ENCODE measurements at regions of chr1 and their contacts with region 1.

Region 1: GRCh38 chr1:111309690-111310089 is 19.0 kb downstream of the CHIA start:
- DNase-seq: no peak
- ATAC-seq: no peak
- H3K4me3 Mint-ChIP-seq: no peak overlapping the region
- H3K27ac Mint-ChIP-seq: no peak overlapping the region
- H3K4me1 Mint-ChIP-seq: no peaks in the 10 kb centered on the region
- H3K27me3 Mint-ChIP-seq: no peaks in the 10 kb centered on the region

Region 2: GRCh38 chr1:111283838-111284237 is 25.9 kb before region 1 on chr1:
- CTCF ChIA-PET with region 1: no interaction called
- POLR2A ChIA-PET with region 1: no interaction called
- intact Hi-C with region 1: no loop called
- DNase-seq: no peak
- ATAC-seq: no peak
- H3K4me3 Mint-ChIP-seq: no peak overlapping the region
- H3K27ac Mint-ChIP-seq: no peak overlapping the region
- H3K4me1 Mint-ChIP-seq: peaks cover 2% of the 10 kb centered on the region
- H3K27me3 Mint-ChIP-seq: no peaks in the 10 kb centered on the region

Region 3: DNA sequence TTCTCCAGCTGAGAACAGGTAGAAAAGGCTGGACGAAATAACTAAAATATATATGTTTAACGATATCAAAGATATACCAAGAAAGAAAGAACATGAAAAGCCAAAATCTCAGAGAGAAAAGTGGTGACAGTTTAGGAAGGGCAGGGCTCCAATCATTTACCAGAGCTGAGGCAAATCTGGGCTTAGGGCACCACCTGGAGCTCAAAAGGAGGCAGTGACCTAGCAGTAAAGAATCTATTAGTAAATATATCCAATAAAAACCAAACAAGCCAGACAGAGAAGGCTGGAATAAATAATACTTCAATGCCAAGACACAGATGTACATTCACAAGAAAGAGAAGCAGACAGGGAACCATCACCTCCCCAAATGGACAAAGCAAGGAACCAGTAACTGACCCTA is 24.5 kb after region 1 on chr1:
- CTCF ChIA-PET with region 1: interaction called, 11 read pairs
- POLR2A ChIA-PET with region 1: no interaction called
- intact Hi-C with region 1: no loop called
- DNase-seq: peak; percentile 67
- ATAC-seq: peak; percentile 88
- H3K4me3 Mint-ChIP-seq: no peak overlapping the region
- H3K27ac Mint-ChIP-seq: no peak overlapping the region
- H3K4me1 Mint-ChIP-seq: no peaks in the 10 kb centered on the region
- H3K27me3 Mint-ChIP-seq: no peaks in the 10 kb centered on the region